Spleen (tissue), 13 donors: ENCODE measurements at regions of chr16 and their contacts with region 1.

Region 1: DNA sequence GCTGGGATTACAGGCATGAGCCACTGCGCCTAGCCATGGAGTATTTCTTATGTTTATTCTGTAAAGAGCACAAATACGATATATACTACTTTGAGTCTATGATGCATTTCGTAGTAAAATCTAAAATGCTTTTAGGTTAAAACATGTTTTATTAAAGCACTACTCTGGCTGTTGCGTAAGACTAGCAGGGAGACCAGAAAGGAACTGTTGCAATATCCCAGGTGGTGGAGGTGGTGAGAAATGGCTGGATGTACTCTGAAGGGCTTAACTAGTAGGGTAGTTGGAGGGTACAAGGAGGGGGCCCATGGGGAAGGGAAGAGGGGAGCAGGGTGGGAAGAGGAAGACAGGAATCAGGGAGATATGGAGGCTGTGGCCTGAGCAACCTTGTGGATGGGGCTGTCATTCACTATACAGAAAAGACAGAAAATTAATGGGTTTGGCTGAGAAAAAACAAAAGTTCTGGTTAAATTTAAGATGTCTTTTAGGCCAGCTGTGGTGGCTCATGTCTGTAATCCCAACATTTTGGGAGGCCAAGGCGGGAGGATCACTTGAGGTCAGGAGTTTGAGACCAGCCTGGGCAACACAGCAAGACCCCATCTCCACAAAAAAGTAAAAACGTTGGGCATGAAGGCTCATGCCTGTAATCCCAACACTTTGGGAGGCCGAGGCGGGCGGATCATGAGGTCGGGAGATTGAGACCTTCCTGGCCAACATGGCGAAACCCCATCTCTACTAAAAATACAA is 35.8 kb downstream of the ST3GAL2 start:
- DNase-seq: no peak
- H3K4me3 ChIP-seq: no peak overlapping the region
- H3K27ac ChIP-seq: peak overlapping the region in 7 of 8 donors; percentile 58 to 86 (median 75)
- H3K4me1 ChIP-seq: peaks cover 20 to 83% (median 56%) of the 10 kb centered on the region in 6 donors
- H3K27me3 ChIP-seq: no peaks in the 10 kb centered on the region
- CTCF ChIP-seq: no peak
- POLR2A ChIP-seq: no peak

Region 2: GRCh38 chr16:70454222-70455034 is 51.3 kb after region 1 on chr16 and contains the start of gene FCSK:
- intact Hi-C with region 1: loop called (anchors 10 kb)
- DNase-seq: peak; percentile 93
- H3K4me3 ChIP-seq: peak within 1 kb of the TSS; percentile 75 to 98 (median 86)
- H3K27ac ChIP-seq: peak within 1 kb of the TSS; percentile 91 to 98 (median 96)
- H3K4me1 ChIP-seq: peaks cover 6 to 42% (median 23%) of the 10 kb centered on the region in 6 donors
- H3K27me3 ChIP-seq: peaks cover 0 to 8% (median 0%) of the 10 kb centered on the region in 7 donors
- CTCF ChIP-seq: peak in 5 of 11 experiments; percentile 4 to 39 (median 11)
- POLR2A ChIP-seq: no peak
- total RNA-seq, gene FCSK: 20.8 to 31.9 (median 27.1) TPM